ENCODE measurements at regions of chr7 and their contacts with region 1.

Region 1: DNA sequence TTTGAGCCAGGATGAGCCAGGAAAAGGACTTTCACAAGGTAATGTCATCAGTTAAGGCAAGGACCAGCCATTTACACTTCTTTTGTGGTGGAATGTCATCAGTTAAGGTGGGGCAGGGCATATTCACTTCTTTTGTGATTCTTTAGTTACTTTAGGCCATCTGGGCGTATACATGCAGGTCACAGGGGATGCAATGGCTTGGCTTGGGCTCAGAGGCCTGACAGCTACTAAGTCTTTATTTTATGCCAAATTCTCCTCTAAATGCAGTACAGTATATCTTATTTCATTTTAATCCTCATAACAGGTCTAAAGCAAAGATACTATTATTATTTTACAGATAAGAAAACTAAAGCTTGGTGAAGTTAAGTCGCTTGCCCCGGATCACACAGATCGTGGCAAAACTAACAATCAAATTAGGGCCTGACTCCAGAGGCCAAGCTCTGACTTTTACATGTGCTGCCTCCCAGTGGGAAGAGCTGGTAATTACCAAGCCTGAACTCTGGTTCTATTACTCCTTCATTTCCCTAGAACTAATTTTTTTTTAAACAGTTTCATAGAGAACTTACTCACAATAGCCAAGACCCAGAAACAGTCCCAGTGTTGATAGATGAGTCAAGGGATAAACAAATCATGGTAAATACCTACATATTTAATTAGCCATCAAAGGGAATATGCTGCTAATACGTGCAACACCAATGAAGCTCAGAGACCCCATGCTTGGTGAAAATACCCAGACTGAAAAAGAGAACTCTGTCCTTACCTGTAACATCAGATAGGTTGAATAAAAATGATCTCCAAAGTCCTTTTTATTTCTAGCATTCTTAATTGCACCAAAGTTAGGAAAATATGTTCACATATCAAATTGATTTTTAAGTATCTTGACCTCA is 35.4 kb downstream of the C7orf25 start:
- DNase-seq: peak; percentile 77
- ATAC-seq: peak; percentile 92
- H3K4me3 Mint-ChIP-seq: no peak overlapping the region
- H3K27ac Mint-ChIP-seq: no peak overlapping the region
- H3K4me1 Mint-ChIP-seq: no peaks in the 10 kb centered on the region
- H3K27me3 Mint-ChIP-seq: peaks cover 6% of the 10 kb centered on the region
- CTCF ChIP-seq: peak; percentile 84

Region 2: GRCh38 chr7:42745357-42746059 is 130.9 kb before region 1 on chr7:
- CTCF ChIA-PET with region 1: interaction called, 10 read pairs
- POLR2A ChIA-PET with region 1: no interaction called
- intact Hi-C with region 1: no loop called
- DNase-seq: peak; percentile 69
- ATAC-seq: no peak
- H3K4me3 Mint-ChIP-seq: no peak overlapping the region
- H3K27ac Mint-ChIP-seq: no peak overlapping the region
- H3K4me1 Mint-ChIP-seq: no peaks in the 10 kb centered on the region
- H3K27me3 Mint-ChIP-seq: peaks cover 4% of the 10 kb centered on the region
- CTCF ChIP-seq: peak; percentile 69

Region 3: DNA sequence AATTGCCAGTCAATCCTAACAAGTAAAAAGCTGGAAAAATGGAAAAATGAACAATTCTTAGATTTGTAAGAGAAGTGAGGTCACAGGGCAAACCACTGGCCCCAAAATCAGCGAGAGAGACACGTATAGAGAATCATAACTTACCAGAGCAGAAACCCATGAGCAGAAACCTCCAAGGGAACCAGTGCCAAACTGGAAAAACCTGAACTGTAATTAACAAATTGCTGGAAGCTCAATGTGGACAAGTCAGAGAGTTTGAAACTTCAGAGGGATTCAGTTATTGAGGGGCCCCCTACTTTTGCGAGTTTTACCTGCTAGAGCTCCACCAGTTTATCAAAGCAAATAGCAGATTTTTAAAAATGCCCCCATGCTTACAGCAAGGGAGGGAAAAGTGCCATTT is 83.6 kb before region 1 on chr7:
- CTCF ChIA-PET with region 1: no interaction called
- POLR2A ChIA-PET with region 1: no interaction called
- intact Hi-C with region 1: no loop called
- DNase-seq: no peak
- ATAC-seq: no peak
- H3K4me3 Mint-ChIP-seq: no peak overlapping the region
- H3K27ac Mint-ChIP-seq: no peak overlapping the region
- H3K4me1 Mint-ChIP-seq: no peaks in the 10 kb centered on the region
- H3K27me3 Mint-ChIP-seq: peaks cover 5% of the 10 kb centered on the region
- CTCF ChIP-seq: no peak

Region 4: GRCh38 chr7:42902331-42902730 is 25.9 kb after region 1 on chr7:
- CTCF ChIA-PET with region 1: no interaction called
- POLR2A ChIA-PET with region 1: no interaction called
- intact Hi-C with region 1: no loop called
- DNase-seq: no peak
- ATAC-seq: no peak
- H3K4me3 Mint-ChIP-seq: no peak overlapping the region
- H3K27ac Mint-ChIP-seq: no peak overlapping the region
- H3K4me1 Mint-ChIP-seq: no peaks in the 10 kb centered on the region
- H3K27me3 Mint-ChIP-seq: no peaks in the 10 kb centered on the region
- CTCF ChIP-seq: no peak

Region 5: GRCh38 chr7:42960762-42961161 is 84.3 kb after region 1 on chr7:
- CTCF ChIA-PET with region 1: no interaction called
- POLR2A ChIA-PET with region 1: no interaction called
- intact Hi-C with region 1: no loop called
- DNase-seq: no peak
- ATAC-seq: peak; percentile 11
- H3K4me3 Mint-ChIP-seq: no peak overlapping the region
- H3K27ac Mint-ChIP-seq: no peak overlapping the region
- H3K4me1 Mint-ChIP-seq: peaks cover 12% of the 10 kb centered on the region
- H3K27me3 Mint-ChIP-seq: peaks cover 13% of the 10 kb centered on the region
- CTCF ChIP-seq: no peak

Measured in activated CD8-positive, alpha-beta T cell treated with anti-CD3 and anti-CD28 coated beads for 36 hours (primary cell).